ENCODE measurements at regions of chr1 and their contacts with region 1.

Region 1: DNA sequence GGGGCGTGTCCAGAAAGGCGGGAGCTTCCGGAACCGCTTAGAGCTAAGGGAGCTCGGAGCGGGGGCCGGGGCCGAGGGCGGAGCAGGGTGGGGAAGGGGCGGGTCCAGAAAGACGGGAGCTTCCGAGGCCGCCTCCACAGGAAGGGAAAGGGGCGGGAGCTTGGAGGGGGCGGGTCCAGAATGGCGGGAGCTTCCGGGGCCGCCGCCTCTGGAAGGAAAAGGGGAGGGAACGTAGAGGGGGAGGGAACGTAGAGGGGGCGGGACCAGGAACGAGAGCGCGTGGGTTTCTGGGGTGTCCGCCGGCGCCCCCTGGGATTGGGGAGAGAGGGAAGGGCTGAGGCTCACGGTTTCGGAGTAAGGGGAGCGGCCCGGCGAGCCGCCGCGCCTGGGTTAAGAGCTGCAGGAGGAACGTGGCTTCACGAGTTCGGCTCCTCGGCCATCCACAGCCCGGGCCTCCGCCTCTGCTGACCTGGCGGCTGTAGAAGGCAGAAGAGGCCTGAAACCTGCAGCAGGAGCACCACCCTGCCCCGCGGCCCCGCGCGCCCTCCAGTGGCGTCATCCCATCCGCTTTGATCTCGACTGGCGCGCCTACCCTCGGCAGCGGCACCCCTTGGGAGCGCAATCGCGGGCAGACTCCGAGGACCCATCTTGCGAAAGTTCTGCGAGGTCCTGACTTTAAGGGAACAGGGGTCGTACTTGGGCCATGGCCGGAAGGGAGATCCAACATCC is 22.9 kb upstream of the HPDL start:
- DNase-seq: peak; percentile 99 to 100 (median 99)
- ATAC-seq: peak; percentile 98 to 99
- H3K4me3 ChIP-seq: peak overlapping the region; percentile 76
- H3K27ac ChIP-seq: peak overlapping the region; percentile 91
- H3K4me1 ChIP-seq: peaks cover 3% of the 10 kb centered on the region
- H3K27me3 ChIP-seq: no peaks in the 10 kb centered on the region

Region 2: GRCh38 chr1:44757420-44757819 is 546.3 kb before region 1 on chr1:
- intact Hi-C with region 1: no loop called
- DNase-seq: no peak
- ATAC-seq: no peak
- H3K4me3 ChIP-seq: no peak overlapping the region
- H3K27ac ChIP-seq: no peak overlapping the region
- H3K4me1 ChIP-seq: no peaks in the 10 kb centered on the region
- H3K27me3 ChIP-seq: no peaks in the 10 kb centered on the region

Region 3: GRCh38 chr1:45011837-45012638 is 291.7 kb before region 1 on chr1 and contains the start of gene UROD:
- intact Hi-C with region 1: loop called (anchors 1 to 5 kb)
- DNase-seq: peak; percentile 93 to 97 (median 95)
- ATAC-seq: peak; percentile 93
- H3K4me3 ChIP-seq: peak within 1 kb of the TSS; percentile 78
- H3K27ac ChIP-seq: peak within 1 kb of the TSS; percentile 91
- H3K4me1 ChIP-seq: peaks cover 9% of the 10 kb centered on the region
- H3K27me3 ChIP-seq: no peaks in the 10 kb centered on the region
- total RNA-seq, gene UROD: 71.9 to 87.6 (median 80.0) TPM

Region 4: GRCh38 chr1:45929257-45929687 is 625.5 kb after region 1 on chr1:
- intact Hi-C with region 1: no loop called
- DNase-seq: no peak
- ATAC-seq: no peak
- H3K4me3 ChIP-seq: no peak overlapping the region
- H3K27ac ChIP-seq: no peak overlapping the region
- H3K4me1 ChIP-seq: peaks cover 3% of the 10 kb centered on the region
- H3K27me3 ChIP-seq: no peaks in the 10 kb centered on the region